ENCODE measurements at regions of chr3 and their contacts with region 1.

Region 1: GRCh38 chr3:167406875-167407492 is 26.9 kb upstream of the ZBBX start:
- DNase-seq: no peak
- ATAC-seq: no peak

Region 2: GRCh38 chr3:167684388-167684993 is 277.5 kb after region 1 on chr3:
- intact Hi-C with region 1: loop called (anchors 10 kb)
- DNase-seq: no peak
- ATAC-seq: no peak